ENCODE measurements at regions of chr3 and their contacts with region 1.

Region 1: GRCh38 chr3:179451265-179452175 is at the start of gene GNB4:
- DNase-seq: peak; percentile 82 to 89 (median 86)
- ATAC-seq: peak; percentile 94
- H3K4me3 ChIP-seq: peak within 1 kb of the TSS; percentile 77
- H3K27ac ChIP-seq: peak within 1 kb of the TSS; percentile 76
- H3K4me1 ChIP-seq: peaks cover 11 to 21% of the 10 kb centered on the region in 2 experiments; a peak in 4 of 5 replicates
- H3K27me3 ChIP-seq: peaks cover 4 to 16% of the 10 kb centered on the region in 2 experiments; a peak in 2 of 5 replicates
- CTCF ChIP-seq: no peak
- EP300 ChIP-seq: no peak
- POLR2A ChIP-seq: peak; percentile 66
- RAD21 ChIP-seq: no peak
- polyA plus RNA-seq, gene GNB4: 6.8 to 7.2 TPM

Region 2: GRCh38 chr3:179224584-179224983 is 226.9 kb before region 1 on chr3:
- CTCF ChIA-PET with region 1: no interaction called
- POLR2A ChIA-PET with region 1: no interaction called
- in situ Hi-C with region 1: no loop called
- intact Hi-C with region 1: no loop called
- DNase-seq: no peak
- ATAC-seq: no peak
- H3K4me3 ChIP-seq: no peak overlapping the region
- H3K27ac ChIP-seq: no peak overlapping the region
- H3K4me1 ChIP-seq: no peaks in the 10 kb centered on the region
- H3K27me3 ChIP-seq: no peaks in the 10 kb centered on the region
- CTCF ChIP-seq: no peak
- EP300 ChIP-seq: no peak
- POLR2A ChIP-seq: no peak
- RAD21 ChIP-seq: no peak

Region 3: GRCh38 chr3:179309225-179310078 is 142.1 kb before region 1 on chr3:
- CTCF ChIA-PET with region 1: no interaction called
- POLR2A ChIA-PET with region 1: no interaction called
- in situ Hi-C with region 1: no loop called
- intact Hi-C with region 1: no loop called
- DNase-seq: no peak
- ATAC-seq: no peak
- H3K4me3 ChIP-seq: no peak overlapping the region
- H3K27ac ChIP-seq: no peak overlapping the region
- H3K4me1 ChIP-seq: peaks cover 0 to 3% of the 10 kb centered on the region in 2 experiments; a peak in 3 of 5 replicates
- H3K27me3 ChIP-seq: no peaks in the 10 kb centered on the region
- CTCF ChIP-seq: no peak
- EP300 ChIP-seq: no peak
- POLR2A ChIP-seq: no peak
- RAD21 ChIP-seq: no peak

Region 4: DNA sequence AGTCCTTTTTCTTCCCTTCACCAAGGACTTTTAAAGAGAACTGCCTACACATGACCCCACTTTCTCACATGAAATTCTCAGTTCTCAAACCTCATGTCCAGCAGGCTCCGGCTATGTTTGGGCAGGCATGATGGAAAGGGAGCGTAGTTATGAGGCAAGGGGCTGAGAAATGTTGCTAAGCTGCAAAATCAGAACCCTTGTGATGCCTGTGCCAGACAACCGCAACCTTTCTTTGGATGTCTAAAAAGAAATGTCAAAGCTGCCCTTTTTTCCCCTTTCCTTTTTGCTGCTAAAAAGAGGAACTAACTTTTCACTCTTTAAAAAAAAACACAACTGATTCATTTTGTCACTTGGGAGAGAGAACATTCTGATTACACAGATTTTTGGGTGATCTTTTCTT is 19.5 kb before region 1 on chr3:
- CTCF ChIA-PET with region 1: no interaction called
- POLR2A ChIA-PET with region 1: interaction called, 14 read pairs
- in situ Hi-C with region 1: no loop called
- intact Hi-C with region 1: no loop called
- DNase-seq: no peak
- ATAC-seq: no peak
- H3K4me3 ChIP-seq: no peak overlapping the region
- H3K27ac ChIP-seq: no peak overlapping the region
- H3K4me1 ChIP-seq: no peaks in the 10 kb centered on the region; a peak in 1 of 5 replicates
- H3K27me3 ChIP-seq: no peaks in the 10 kb centered on the region
- CTCF ChIP-seq: no peak
- EP300 ChIP-seq: no peak
- POLR2A ChIP-seq: no peak
- RAD21 ChIP-seq: no peak

Region 5: DNA sequence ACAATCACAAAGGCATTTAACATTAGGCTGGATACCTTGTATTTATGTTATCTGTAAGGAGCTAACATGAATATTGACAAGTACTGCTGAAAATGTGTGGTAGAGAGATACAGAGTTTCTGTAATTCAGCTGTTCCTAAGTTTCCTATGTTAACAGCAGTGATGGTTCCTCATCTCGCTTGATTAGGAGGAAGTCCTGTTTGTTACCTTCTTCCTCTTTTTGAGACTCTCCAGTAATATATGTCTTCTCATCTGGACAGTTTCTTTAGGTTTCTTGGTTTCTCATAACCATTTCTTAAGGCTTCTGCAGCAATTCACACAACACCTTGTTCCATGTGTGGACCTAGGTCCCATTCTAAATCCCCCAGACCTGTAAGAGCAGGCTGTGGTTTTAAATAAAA is 596.6 kb after region 1 on chr3:
- CTCF ChIA-PET with region 1: no interaction called
- POLR2A ChIA-PET with region 1: no interaction called
- in situ Hi-C with region 1: no loop called
- intact Hi-C with region 1: no loop called
- DNase-seq: no peak
- ATAC-seq: no peak
- H3K4me3 ChIP-seq: no peak overlapping the region
- H3K27ac ChIP-seq: no peak overlapping the region
- H3K4me1 ChIP-seq: no peaks in the 10 kb centered on the region
- H3K27me3 ChIP-seq: no peaks in the 10 kb centered on the region
- CTCF ChIP-seq: no peak
- EP300 ChIP-seq: no peak
- POLR2A ChIP-seq: no peak
- RAD21 ChIP-seq: no peak